GM10248 (cell line): ENCODE measurements at regions of chr9 and their contacts with region 1.

Region 1: DNA sequence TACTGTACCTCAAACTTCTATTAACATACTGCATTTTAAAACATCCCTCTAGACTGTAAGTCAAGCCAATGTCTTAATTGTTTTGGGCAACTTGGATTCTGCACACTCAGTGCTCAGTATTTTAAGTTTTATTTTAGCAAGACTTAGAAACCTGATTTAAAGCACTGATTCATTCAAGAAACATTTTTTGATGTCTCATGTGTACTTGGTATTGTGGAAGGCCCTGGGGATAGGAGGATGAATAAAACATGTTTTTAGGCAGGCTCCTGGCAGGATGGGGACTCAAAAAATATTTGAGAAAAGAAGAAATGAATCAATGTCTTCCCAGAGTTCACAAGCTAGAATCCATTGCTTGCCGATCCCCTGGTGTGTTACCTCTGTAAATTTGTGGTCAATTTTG is 334.0 kb upstream of the PUM3 start:
- DNase-seq: no peak
- CTCF ChIP-seq: no peak

Region 2: DNA sequence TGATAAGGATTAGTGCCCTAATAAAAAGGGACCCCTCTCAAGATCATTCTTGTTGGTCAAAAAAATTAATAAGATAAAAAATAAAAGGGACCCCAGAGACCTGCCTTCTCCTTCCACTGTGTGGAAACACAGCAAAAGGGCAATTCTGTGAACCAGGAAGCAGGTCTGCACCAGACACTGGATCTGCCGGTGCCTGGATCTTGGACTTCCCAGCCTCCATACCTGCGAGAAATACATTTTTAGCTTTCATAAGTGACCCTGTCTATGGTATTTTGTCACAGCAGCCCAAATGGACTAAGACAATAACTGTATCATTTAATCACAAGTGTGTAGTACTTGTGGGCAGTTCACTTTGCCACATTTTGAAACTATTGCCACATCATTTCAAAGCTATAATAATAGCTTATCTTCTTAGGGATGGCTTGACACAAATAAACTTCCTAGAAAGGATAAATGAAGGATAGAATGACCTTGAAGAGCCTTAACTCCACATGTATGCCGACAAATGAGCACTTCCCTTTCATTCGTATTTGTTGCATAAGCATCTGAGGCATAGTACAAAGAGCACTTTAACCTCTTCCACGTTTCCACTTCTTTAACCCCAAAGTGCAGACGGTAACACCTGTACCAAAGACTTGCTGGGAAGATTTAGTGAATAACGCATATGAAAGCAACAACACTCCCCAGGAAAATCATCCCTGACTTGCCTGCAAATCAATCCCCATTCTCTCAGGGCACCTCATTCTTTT is 11.4 kb after region 1 on chr9:
- CTCF ChIA-PET with region 1: interaction called, 10 read pairs
- POLR2A ChIA-PET with region 1: no interaction called
- DNase-seq: no peak
- CTCF ChIP-seq: no peak